Activated CD4-positive, alpha-beta memory T cell treated with anti-CD3 and anti-CD28 coated beads, Interleukin-2, amount 10 ng/mL, durations not matched to agents 7 days and 5 days (primary cell): ENCODE measurements at regions of chr10 and their contacts with region 1.

Region 1: DNA sequence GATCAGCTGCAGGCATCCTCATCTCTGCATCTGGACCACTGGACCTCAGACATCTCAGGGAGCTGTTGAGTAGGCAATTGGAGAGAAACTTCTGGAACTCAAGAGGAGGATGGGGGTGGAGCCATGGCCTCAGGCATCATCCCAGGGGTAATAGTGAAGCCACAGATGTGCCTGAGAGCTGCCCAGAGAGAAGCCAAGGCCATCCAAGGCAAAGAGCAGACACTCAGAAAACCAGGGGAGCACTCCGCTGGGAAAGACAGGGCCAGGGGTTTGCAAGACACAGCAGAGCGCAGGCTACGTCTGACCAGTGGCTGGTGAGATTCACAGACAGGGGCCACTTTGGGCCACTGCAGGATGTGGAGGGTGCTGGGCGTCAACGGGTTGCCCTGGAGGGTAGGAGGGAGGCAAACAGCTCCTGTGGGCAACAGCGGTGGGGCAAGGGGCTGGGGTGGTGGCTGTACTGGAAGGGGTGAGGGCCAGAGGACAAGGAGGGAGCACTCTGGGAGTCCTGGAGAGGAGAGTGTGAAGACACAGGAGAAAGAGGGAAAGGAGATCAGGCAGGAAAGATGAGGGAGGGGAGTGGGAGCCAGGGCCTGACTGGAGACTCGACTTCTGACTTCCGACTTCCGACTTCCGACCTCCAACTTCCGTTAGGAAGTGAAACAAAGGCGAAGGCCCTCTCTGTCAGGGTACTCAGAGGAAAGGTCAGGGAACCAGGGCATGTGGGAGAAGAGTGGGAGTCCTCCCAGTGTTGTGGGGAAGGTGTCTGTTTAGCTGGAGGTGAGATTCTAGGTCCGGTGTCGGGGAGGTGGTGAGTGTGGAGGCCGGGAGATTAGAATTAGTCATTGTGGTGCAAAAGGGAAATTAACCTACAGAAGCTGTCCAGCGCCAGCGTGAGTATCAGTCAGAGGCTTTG is 69.7 kb upstream of the ANTXRL start:
- DNase-seq: no peak
- H3K4me3 Mint-ChIP-seq: no peak overlapping the region
- H3K27ac Mint-ChIP-seq: no peak overlapping the region
- H3K4me1 Mint-ChIP-seq: peaks cover 21% of the 10 kb centered on the region
- H3K27me3 Mint-ChIP-seq: no peaks in the 10 kb centered on the region

Region 2: GRCh38 chr10:46228563-46229071 is 11.5 kb after region 1 on chr10:
- CTCF ChIA-PET with region 1: interaction called, 10 read pairs
- POLR2A ChIA-PET with region 1: no interaction called
- DNase-seq: peak; percentile 61
- H3K4me3 Mint-ChIP-seq: no peak overlapping the region
- H3K27ac Mint-ChIP-seq: no peak overlapping the region
- H3K4me1 Mint-ChIP-seq: no peaks in the 10 kb centered on the region
- H3K27me3 Mint-ChIP-seq: no peaks in the 10 kb centered on the region

Region 3: DNA sequence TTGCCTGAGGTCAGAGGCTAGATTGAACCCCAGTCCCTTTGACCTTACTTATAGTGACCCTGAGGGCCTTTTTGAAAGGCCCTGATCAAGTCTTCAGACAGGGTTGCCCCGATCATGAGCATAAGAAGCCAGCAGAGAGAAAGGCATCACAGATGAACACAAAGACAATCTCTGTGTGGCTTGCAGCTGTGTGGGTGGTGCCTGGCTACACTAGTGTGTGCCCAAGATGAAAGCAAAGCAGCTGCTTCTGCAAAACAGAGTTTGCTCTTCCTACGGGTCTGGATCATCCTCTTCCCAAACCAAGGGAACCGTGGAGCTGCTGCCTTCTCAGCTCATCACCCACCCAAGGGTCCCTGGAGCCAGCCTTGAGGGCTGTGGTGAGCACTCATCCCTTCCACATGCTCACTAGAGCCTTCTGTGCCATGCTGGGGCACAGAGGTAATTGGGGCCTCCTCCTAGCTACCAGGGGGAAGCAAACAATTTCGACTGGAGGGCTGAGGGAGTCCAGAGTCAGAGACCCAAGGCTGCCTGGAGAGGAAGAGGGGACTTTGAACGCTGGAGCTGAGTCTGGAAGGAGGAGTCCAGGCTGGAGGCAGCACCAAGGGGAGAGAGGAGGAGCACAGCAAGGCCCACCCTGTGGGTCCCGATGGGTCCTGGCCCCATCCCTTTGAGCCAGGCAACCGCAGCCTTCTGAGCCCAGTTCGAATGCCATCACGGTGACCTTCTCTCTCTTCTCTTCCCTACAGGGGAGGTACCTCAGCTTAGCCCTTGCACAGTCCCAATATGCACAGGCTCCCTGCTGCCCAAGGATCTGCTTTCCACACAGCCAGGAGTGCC is 112.0 kb after region 1 on chr10:
- CTCF ChIA-PET with region 1: no interaction called
- POLR2A ChIA-PET with region 1: no interaction called
- DNase-seq: no peak
- H3K4me3 Mint-ChIP-seq: no peak overlapping the region
- H3K27ac Mint-ChIP-seq: no peak overlapping the region
- H3K4me1 Mint-ChIP-seq: no peaks in the 10 kb centered on the region
- H3K27me3 Mint-ChIP-seq: no peaks in the 10 kb centered on the region